ENCODE measurements at regions of chr10 and their contacts with region 1.

Region 1: GRCh38 chr10:22655311-22655981 is 58.9 kb downstream of the PIP4K2A start:
- DNase-seq: peak in 7 of 9 experiments; percentile 29 to 84 (median 67)
- ATAC-seq: peak; percentile 72
- H3K4me3 ChIP-seq: peak overlapping the region; percentile 3 to 9
- H3K4me3 Mint-ChIP-seq: peak overlapping the region; percentile 72
- H3K27ac ChIP-seq: peak overlapping the region; percentile 19 to 74
- H3K27ac Mint-ChIP-seq: peak overlapping the region; percentile 96
- H3K4me1 ChIP-seq: peaks cover 98% of the 10 kb centered on the region
- H3K4me1 Mint-ChIP-seq: peaks cover 92% of the 10 kb centered on the region
- H3K27me3 ChIP-seq: no peaks in the 10 kb centered on the region
- H3K27me3 Mint-ChIP-seq: no peaks in the 10 kb centered on the region
- CTCF ChIP-seq: no peak

Region 2: GRCh38 chr10:22228943-22229801 is 426.3 kb before region 1 on chr10:
- CTCF ChIA-PET with region 1: no interaction called
- POLR2A ChIA-PET with region 1: no interaction called
- intact Hi-C with region 1: loop called in 1 of 2 experiments (anchors 10 kb)
- DNase-seq: peak; percentile 66 to 92 (median 86)
- ATAC-seq: peak; percentile 76
- H3K4me3 ChIP-seq: peak overlapping the region; percentile 67 to 77
- H3K4me3 Mint-ChIP-seq: peak overlapping the region; percentile 82
- H3K27ac ChIP-seq: peak overlapping the region; percentile 60 to 63
- H3K27ac Mint-ChIP-seq: peak overlapping the region; percentile 98
- H3K4me1 ChIP-seq: peaks cover 8% of the 10 kb centered on the region
- H3K4me1 Mint-ChIP-seq: peaks cover 14% of the 10 kb centered on the region
- H3K27me3 ChIP-seq: peaks cover 0 to 3% of the 10 kb centered on the region in 2 experiments
- H3K27me3 Mint-ChIP-seq: no peaks in the 10 kb centered on the region
- CTCF ChIP-seq: no peak

Region 3: DNA sequence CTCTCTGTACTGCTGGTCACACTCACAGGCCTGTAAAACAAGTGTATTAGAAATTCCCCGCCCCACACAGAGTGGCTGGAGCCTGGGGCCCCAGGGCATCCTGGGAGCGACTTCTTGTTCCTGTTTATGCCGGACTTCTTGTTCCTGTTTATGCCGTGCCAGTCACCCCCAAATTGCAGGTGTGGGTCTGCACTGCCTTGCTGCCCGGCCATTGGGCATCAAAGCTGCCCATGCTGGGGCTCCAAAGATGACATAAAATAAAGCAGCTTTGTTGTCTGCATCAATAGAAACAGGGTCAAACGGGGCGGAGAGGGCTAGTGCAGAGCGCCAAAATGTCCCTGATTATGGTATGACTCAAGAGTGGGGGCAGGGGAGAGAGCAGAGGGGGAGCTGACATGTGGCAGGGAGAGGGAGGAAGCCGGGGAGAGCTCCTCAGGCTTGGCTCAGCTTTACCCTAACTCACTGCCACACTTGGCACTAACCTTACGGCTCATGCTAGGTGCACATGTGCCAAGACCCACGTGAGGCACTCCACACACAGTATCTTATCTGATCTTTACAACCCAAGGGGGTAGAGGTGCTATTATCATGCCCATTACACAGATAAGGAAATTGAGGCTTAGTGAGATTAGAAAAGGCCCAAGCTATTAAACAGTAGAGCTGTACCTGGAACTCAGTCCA is 39.5 kb before region 1 on chr10:
- CTCF ChIA-PET with region 1: interaction called, 23 read pairs
- POLR2A ChIA-PET with region 1: interaction called, 20 read pairs
- intact Hi-C with region 1: loop called in 1 of 2 experiments (anchors 2 kb)
- DNase-seq: peak in 5 of 9 experiments; percentile 38 to 85 (median 59)
- ATAC-seq: peak; percentile 20
- H3K4me3 ChIP-seq: peak overlapping the region in 1 of 2 experiments; percentile 15
- H3K4me3 Mint-ChIP-seq: peak overlapping the region; percentile 71
- H3K27ac ChIP-seq: peak overlapping the region; percentile 15 to 90
- H3K27ac Mint-ChIP-seq: peak overlapping the region; percentile 92
- H3K4me1 ChIP-seq: peaks cover 91% of the 10 kb centered on the region
- H3K4me1 Mint-ChIP-seq: peaks cover 98% of the 10 kb centered on the region
- H3K27me3 ChIP-seq: no peaks in the 10 kb centered on the region
- H3K27me3 Mint-ChIP-seq: no peaks in the 10 kb centered on the region
- CTCF ChIP-seq: no peak

Region 4: DNA sequence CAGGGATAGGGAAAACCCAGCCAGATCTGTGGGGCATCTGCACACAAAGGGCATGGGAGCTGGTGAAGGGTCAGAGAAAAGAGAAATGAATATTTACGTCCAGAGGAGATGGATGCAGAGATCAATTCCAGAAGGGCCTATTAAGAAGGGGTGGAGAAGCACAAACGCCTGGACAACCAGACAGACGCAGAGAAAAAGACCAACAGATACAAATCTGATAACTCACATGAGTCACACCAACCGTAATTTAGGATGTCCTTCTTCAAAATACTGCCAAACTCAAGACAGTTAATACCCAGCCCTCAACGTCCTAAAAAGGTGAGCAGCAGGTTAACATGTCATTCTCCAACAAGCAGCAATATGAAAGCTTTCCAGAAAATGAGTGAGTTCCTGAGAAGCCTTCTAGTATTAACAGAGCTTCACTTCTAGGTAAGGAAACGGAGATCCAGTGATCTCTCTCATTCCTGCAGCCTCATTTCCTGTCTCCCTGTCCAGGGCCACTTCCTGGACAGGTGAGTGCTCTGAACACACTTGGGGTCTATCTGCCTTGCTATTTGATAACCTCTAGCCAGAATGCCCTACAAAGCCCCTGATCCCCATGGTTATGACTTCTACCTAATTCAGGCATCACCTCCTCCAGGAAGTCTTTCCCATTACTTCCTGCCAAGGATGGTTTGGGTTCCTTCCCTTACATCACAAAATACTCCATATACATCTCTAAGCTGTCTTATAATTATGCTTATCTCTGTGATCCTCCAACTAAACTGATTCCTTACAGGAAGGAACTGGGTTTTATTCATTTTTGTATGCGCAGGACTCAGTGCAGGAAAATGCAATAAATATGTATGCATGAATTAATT is 17.3 kb after region 1 on chr10:
- CTCF ChIA-PET with region 1: interaction called, 8 read pairs
- POLR2A ChIA-PET with region 1: interaction called, 12 read pairs
- intact Hi-C with region 1: no loop called
- DNase-seq: peak in 1 of 9 experiments; percentile 25
- ATAC-seq: no peak
- H3K4me3 ChIP-seq: no peak overlapping the region
- H3K4me3 Mint-ChIP-seq: peak overlapping the region; percentile 55
- H3K27ac ChIP-seq: peak overlapping the region in 1 of 2 experiments; percentile 49
- H3K27ac Mint-ChIP-seq: peak overlapping the region; percentile 88
- H3K4me1 ChIP-seq: peaks cover 90% of the 10 kb centered on the region
- H3K4me1 Mint-ChIP-seq: peaks cover 92% of the 10 kb centered on the region
- H3K27me3 ChIP-seq: no peaks in the 10 kb centered on the region
- H3K27me3 Mint-ChIP-seq: no peaks in the 10 kb centered on the region
- CTCF ChIP-seq: no peak

Region 5: DNA sequence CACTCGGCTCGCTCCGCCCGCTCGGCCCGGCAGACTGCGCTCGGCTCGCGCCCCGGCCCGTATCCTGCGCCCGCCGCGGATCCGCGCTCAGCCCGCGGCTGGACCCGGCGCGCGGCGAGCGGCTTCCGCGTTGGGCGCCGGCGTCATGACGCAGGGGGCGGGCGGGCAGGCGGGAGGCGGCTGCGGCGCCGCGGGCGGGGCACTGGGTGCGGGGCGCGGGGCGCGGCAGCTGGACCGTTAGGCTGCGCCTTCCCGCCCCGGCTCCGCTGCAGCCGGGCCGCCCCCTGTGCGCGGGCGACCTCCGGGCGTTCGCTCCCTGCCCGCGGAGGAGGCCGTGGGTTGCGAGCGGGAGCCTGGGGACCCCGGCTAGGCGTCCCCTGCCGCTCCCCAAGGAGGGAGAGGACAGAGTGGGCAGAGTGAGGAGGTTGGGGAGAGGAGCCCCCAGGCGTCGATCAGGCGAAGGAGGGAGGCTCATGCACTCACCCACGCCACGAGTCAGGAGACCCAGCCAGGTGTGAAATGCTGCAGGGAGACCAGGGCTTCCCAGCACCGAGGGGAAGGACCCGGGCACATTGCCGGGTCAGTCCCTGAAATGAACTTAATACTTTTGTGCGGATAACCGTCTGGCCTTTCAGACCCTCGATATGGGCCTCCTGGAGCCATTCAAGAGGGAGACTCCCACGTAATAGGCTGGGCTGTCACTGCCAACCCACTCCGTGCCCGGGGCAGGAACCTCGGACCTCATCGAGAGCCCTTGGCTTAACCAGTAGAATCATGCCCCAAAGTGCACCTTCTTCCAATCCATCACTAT is 59.2 kb after region 1 on chr10 and contains the start of gene PIP4K2A:
- CTCF ChIA-PET with region 1: interaction called, 14 read pairs
- POLR2A ChIA-PET with region 1: interaction called, 38 read pairs
- intact Hi-C with region 1: loop called (anchors 2 kb)
- DNase-seq: peak; percentile 43 to 92 (median 75)
- ATAC-seq: peak; percentile 76
- H3K4me3 ChIP-seq: peak within 1 kb of the TSS; percentile 72 to 95
- H3K4me3 Mint-ChIP-seq: peak within 1 kb of the TSS; percentile 94
- H3K27ac ChIP-seq: peak within 1 kb of the TSS; percentile 78 to 81
- H3K27ac Mint-ChIP-seq: peak within 1 kb of the TSS; percentile 92
- H3K4me1 ChIP-seq: peaks cover 25% of the 10 kb centered on the region
- H3K4me1 Mint-ChIP-seq: peaks cover 30% of the 10 kb centered on the region
- H3K27me3 ChIP-seq: no peaks in the 10 kb centered on the region
- H3K27me3 Mint-ChIP-seq: no peaks in the 10 kb centered on the region
- CTCF ChIP-seq: no peak
- total RNA-seq, gene PIP4K2A: 82.5 to 89.5 TPM

Region 6: DNA sequence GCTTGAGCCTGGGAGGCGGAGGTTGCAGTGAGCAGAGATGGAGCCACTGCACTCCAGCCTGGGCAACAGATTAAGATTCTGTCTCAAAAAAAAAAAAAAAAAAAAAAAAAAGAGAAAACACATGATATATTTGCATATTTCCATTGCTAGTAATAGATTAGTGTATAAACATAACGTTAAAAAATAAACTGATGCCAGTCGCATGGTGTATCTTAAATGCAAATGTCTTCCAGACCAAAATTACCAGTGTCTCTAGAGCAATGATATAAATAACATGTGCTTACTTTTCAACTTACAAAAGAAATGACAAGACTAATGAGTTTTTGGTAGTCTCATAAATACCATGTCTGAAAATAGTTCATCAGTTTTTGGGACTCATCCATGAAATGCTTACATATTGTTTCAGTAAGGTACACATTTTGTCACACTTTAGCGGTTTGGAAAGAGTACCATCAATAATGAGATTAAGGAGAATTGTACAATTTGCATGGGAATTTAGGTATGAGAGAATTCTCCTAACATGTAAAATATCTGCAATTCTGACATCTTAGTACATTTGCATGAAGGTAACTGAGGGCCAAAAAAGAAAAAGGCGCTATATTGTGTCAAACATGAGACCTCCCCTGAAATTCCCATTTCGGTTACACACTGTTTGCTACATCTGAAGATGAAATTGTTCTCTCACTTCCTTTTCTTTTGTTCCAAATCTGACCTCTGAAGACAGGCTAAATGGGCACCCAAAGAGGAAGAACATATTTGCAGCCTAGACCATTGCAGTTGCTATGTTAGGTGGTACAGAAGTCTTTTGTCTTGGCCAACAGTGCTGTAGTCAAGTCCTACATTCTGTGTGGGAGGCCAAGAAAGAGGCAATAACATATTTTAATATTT is 110.5 kb after region 1 on chr10:
- CTCF ChIA-PET with region 1: no interaction called
- POLR2A ChIA-PET with region 1: no interaction called
- intact Hi-C with region 1: no loop called
- DNase-seq: no peak
- ATAC-seq: no peak
- H3K4me3 ChIP-seq: no peak overlapping the region
- H3K4me3 Mint-ChIP-seq: no peak overlapping the region
- H3K27ac ChIP-seq: no peak overlapping the region
- H3K27ac Mint-ChIP-seq: no peak overlapping the region
- H3K4me1 ChIP-seq: no peaks in the 10 kb centered on the region
- H3K4me1 Mint-ChIP-seq: no peaks in the 10 kb centered on the region
- H3K27me3 ChIP-seq: no peaks in the 10 kb centered on the region
- H3K27me3 Mint-ChIP-seq: no peaks in the 10 kb centered on the region
- CTCF ChIP-seq: no peak

Region 7: GRCh38 chr10:22780474-22780885 is 125.0 kb after region 1 on chr10:
- CTCF ChIA-PET with region 1: no interaction called
- POLR2A ChIA-PET with region 1: no interaction called
- intact Hi-C with region 1: no loop called
- DNase-seq: no peak
- ATAC-seq: no peak
- H3K4me3 ChIP-seq: no peak overlapping the region
- H3K4me3 Mint-ChIP-seq: no peak overlapping the region
- H3K27ac ChIP-seq: no peak overlapping the region
- H3K27ac Mint-ChIP-seq: no peak overlapping the region
- H3K4me1 ChIP-seq: no peaks in the 10 kb centered on the region
- H3K4me1 Mint-ChIP-seq: peaks cover 6% of the 10 kb centered on the region
- H3K27me3 ChIP-seq: no peaks in the 10 kb centered on the region
- H3K27me3 Mint-ChIP-seq: no peaks in the 10 kb centered on the region
- CTCF ChIP-seq: no peak